GM13976 (cell line): ENCODE measurements at regions of chr9 and their contacts with region 1.

Region 1: GRCh38 chr9:7011395-7012067 is 253.8 kb downstream of the KDM4C start:
- DNase-seq: no peak
- CTCF ChIP-seq: no peak

Region 2: GRCh38 chr9:6827439-6827838 is 184.1 kb before region 1 on chr9:
- in situ Hi-C with region 1: loop called (anchors 10 kb)
- DNase-seq: peak; percentile 55
- CTCF ChIP-seq: peak; percentile 41

Region 3: GRCh38 chr9:7234143-7234542 is 222.6 kb after region 1 on chr9:
- in situ Hi-C with region 1: no loop called
- DNase-seq: peak; percentile 29
- CTCF ChIP-seq: peak; percentile 50